ENCODE measurements at regions of chr12 and their contacts with region 1.

Region 1: GRCh38 chr12:111405149-111405860 is 418 bp upstream of the SH2B3 start:
- DNase-seq: peak; percentile 96 to 100 (median 99)
- ATAC-seq: peak; percentile 78
- H3K4me3 ChIP-seq: peak overlapping the region; percentile 63
- H3K4me3 Mint-ChIP-seq: peak overlapping the region; percentile 89
- H3K27ac ChIP-seq: peak overlapping the region; percentile 75 to 98
- H3K27ac Mint-ChIP-seq: peak overlapping the region; percentile 72
- H3K4me1 ChIP-seq: peaks cover 68% of the 10 kb centered on the region
- H3K4me1 Mint-ChIP-seq: peaks cover 62% of the 10 kb centered on the region
- H3K27me3 ChIP-seq: no peaks in the 10 kb centered on the region
- H3K27me3 Mint-ChIP-seq: no peaks in the 10 kb centered on the region
- CTCF ChIP-seq: peak; percentile 74

Region 2: DNA sequence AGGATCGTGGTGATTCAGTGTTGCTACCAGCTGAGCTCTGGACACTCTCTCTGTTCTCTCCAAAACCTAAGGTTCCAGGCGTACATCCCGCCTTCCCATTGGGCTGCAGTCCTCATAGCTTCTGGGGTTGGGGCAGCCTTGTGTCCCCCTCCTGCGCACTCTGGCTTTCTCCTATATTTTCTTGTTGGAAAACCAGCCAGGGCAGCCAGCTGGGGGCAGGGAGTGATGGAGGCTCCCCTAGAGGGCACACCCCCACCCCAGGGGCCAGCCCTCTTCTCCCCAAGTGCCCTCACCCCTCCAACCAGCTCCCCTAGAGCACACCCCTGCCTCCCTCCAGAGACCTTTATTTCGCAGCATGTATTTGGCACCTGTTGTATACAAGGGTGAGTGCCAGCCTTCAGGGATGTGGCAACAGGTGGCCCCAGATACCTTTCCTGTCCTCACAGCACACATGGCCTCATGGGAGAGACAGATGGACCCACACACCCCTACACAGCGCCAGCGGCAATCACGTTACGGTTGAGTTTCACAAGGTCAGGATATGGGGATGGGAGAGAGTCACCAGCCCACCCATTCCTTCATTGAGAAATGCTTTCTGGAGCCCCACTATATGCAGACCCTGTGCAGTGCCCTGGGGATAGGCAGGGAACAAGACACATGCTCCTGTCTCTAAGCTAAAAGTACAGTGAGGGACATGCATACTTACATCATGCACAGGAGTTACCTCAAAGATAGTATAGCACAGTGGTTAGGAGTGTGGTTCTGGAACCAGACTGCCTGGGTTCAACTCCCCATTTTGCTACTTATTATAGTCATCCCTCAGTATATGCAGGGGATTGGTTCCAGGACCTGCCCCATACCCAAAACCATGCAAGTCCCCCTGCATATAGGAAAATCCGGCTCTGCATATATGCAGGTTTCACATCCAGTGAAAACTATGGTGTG is 177.6 kb before region 1 on chr12:
- CTCF ChIA-PET with region 1: no interaction called
- POLR2A ChIA-PET with region 1: no interaction called
- intact Hi-C with region 1: no loop called
- DNase-seq: no peak
- ATAC-seq: no peak
- H3K4me3 ChIP-seq: no peak overlapping the region
- H3K4me3 Mint-ChIP-seq: no peak overlapping the region
- H3K27ac ChIP-seq: no peak overlapping the region
- H3K27ac Mint-ChIP-seq: no peak overlapping the region
- H3K4me1 ChIP-seq: no peaks in the 10 kb centered on the region
- H3K4me1 Mint-ChIP-seq: no peaks in the 10 kb centered on the region
- H3K27me3 ChIP-seq: peaks cover 4% of the 10 kb centered on the region in 2 experiments
- H3K27me3 Mint-ChIP-seq: peaks cover 13% of the 10 kb centered on the region
- CTCF ChIP-seq: no peak

Region 3: DNA sequence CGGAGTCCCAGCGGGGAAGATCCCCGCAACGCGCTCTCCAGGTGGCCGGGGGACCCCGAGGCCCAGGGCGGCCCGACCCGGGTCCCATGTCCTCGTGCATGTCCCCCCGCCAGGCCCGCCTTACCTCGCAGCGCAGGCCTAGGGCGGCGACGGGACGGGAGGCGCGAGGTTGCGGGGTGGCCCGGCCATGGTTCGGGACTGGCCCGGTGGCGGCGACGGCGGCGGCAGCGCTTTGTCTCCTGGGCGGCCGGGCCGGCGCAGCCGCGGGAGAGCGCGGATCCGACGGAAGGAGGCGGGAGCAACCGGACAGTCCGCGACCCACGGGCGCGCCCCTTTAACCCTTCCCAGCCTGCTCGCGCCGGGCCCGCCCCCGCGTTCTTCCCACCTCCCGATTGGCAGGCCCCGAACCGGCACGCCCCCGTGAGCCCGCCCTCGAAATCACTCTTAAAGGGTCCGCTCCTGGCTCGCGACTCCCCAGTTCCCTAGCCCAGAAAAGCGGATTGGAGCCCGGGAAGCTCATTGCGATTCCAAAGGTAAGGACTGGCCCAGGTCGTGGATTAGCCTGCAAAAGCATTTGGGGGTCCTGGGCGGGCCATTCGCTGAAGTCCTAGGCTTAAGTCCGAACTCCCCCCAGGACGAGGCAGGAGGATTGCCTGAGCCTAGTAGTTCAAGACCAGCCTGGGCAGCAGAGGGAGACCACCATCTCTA is 36.4 kb before region 1 on chr12 and contains the start of gene PHETA1:
- CTCF ChIA-PET with region 1: no interaction called
- POLR2A ChIA-PET with region 1: no interaction called
- intact Hi-C with region 1: loop called in 1 of 2 experiments (anchors 1 kb)
- DNase-seq: peak; percentile 49 to 85 (median 70)
- ATAC-seq: peak; percentile 87
- H3K4me3 ChIP-seq: peak within 1 kb of the TSS; percentile 71
- H3K4me3 Mint-ChIP-seq: peak within 1 kb of the TSS; percentile 92
- H3K27ac ChIP-seq: no peak within 1 kb of the TSS
- H3K27ac Mint-ChIP-seq: peak within 1 kb of the TSS; percentile 36
- H3K4me1 ChIP-seq: peaks cover 24% of the 10 kb centered on the region
- H3K4me1 Mint-ChIP-seq: peaks cover 21% of the 10 kb centered on the region
- H3K27me3 ChIP-seq: no peaks in the 10 kb centered on the region
- H3K27me3 Mint-ChIP-seq: no peaks in the 10 kb centered on the region
- CTCF ChIP-seq: no peak
- total RNA-seq, gene PHETA1: 1.3 to 1.7 TPM

Region 4: GRCh38 chr12:111424793-111425251 is 19.5 kb after region 1 on chr12:
- CTCF ChIA-PET with region 1: interaction called, 5 read pairs
- POLR2A ChIA-PET with region 1: interaction called, 35 read pairs
- intact Hi-C with region 1: loop called (anchors 1 to 2 kb)
- DNase-seq: peak in 2 of 14 experiments; percentile 53 to 63
- ATAC-seq: peak; percentile 45
- H3K4me3 ChIP-seq: no peak overlapping the region
- H3K4me3 Mint-ChIP-seq: no peak overlapping the region
- H3K27ac ChIP-seq: peak overlapping the region; percentile 14 to 63
- H3K27ac Mint-ChIP-seq: peak overlapping the region; percentile 100
- H3K4me1 ChIP-seq: peaks cover 65% of the 10 kb centered on the region
- H3K4me1 Mint-ChIP-seq: peaks cover 63% of the 10 kb centered on the region
- H3K27me3 ChIP-seq: no peaks in the 10 kb centered on the region
- H3K27me3 Mint-ChIP-seq: no peaks in the 10 kb centered on the region
- CTCF ChIP-seq: no peak

Region 5: GRCh38 chr12:111434680-111435338 is 29.5 kb after region 1 on chr12:
- CTCF ChIA-PET with region 1: interaction called, 487 read pairs
- POLR2A ChIA-PET with region 1: interaction called, 66 read pairs
- intact Hi-C with region 1: loop called in 1 of 2 experiments (anchors 1 kb)
- DNase-seq: peak; percentile 68 to 96 (median 82)
- ATAC-seq: peak; percentile 73
- H3K4me3 ChIP-seq: peak overlapping the region; percentile 43
- H3K4me3 Mint-ChIP-seq: peak overlapping the region; percentile 90
- H3K27ac ChIP-seq: peak overlapping the region; percentile 93 to 97
- H3K27ac Mint-ChIP-seq: peak overlapping the region; percentile 100
- H3K4me1 ChIP-seq: peaks cover 97% of the 10 kb centered on the region
- H3K4me1 Mint-ChIP-seq: peaks cover 93% of the 10 kb centered on the region
- H3K27me3 ChIP-seq: no peaks in the 10 kb centered on the region
- H3K27me3 Mint-ChIP-seq: no peaks in the 10 kb centered on the region
- CTCF ChIP-seq: no peak

Region 6: GRCh38 chr12:111444925-111445725 is 39.8 kb after region 1 on chr12:
- CTCF ChIA-PET with region 1: interaction called, 487 read pairs
- POLR2A ChIA-PET with region 1: interaction called, 53 read pairs
- intact Hi-C with region 1: loop called in 1 of 2 experiments (anchors 1 kb)
- DNase-seq: peak; percentile 58 to 95 (median 73)
- ATAC-seq: peak; percentile 96
- H3K4me3 ChIP-seq: peak overlapping the region; percentile 12
- H3K4me3 Mint-ChIP-seq: peak overlapping the region; percentile 65
- H3K27ac ChIP-seq: peak overlapping the region; percentile 74 to 80
- H3K27ac Mint-ChIP-seq: peak overlapping the region; percentile 82
- H3K4me1 ChIP-seq: peaks cover 76% of the 10 kb centered on the region
- H3K4me1 Mint-ChIP-seq: peaks cover 64% of the 10 kb centered on the region
- H3K27me3 ChIP-seq: no peaks in the 10 kb centered on the region
- H3K27me3 Mint-ChIP-seq: no peaks in the 10 kb centered on the region
- CTCF ChIP-seq: no peak

Region 7: DNA sequence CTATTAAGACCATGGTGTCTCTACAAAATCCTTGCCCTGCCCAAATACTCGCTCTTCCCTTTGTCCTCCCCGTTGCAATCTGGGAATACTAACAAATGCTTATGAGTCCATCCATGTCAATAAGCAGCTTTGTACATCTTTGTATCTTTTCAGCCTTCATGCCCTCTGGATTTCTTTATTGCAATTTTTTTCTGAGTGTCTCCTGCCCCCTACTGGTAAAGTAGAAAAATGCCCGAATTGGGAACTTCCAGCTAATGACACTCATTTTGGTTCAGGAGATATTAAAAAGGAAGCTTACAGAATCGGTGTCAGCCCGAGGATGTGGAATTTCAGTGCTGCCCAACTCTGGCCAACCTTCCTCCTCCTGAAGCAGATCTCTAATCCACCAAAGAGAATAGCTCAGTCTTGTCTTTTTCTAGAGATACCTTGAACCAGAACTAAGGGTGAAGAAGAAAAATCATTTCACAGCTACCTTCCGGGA is 46.4 kb after region 1 on chr12:
- CTCF ChIA-PET with region 1: interaction called, 487 read pairs
- POLR2A ChIA-PET with region 1: interaction called, 53 read pairs
- intact Hi-C with region 1: loop called in 1 of 2 experiments (anchors 1 kb)
- DNase-seq: peak in 3 of 14 experiments; percentile 77 to 81 (median 81)
- ATAC-seq: peak; percentile 78
- H3K4me3 ChIP-seq: no peak overlapping the region
- H3K4me3 Mint-ChIP-seq: no peak overlapping the region
- H3K27ac ChIP-seq: no peak overlapping the region
- H3K27ac Mint-ChIP-seq: peak overlapping the region; percentile 14
- H3K4me1 ChIP-seq: peaks cover 25% of the 10 kb centered on the region
- H3K4me1 Mint-ChIP-seq: peaks cover 18% of the 10 kb centered on the region
- H3K27me3 ChIP-seq: no peaks in the 10 kb centered on the region
- H3K27me3 Mint-ChIP-seq: no peaks in the 10 kb centered on the region
- CTCF ChIP-seq: peak; percentile 80

Region 8: GRCh38 chr12:111599459-111600204 is 194.3 kb after region 1 on chr12:
- CTCF ChIA-PET with region 1: no interaction called
- POLR2A ChIA-PET with region 1: interaction called, 3 read pairs
- intact Hi-C with region 1: loop called (anchors 5 to 10 kb)
- DNase-seq: peak; percentile 70 to 92 (median 80)
- ATAC-seq: peak; percentile 69
- H3K4me3 ChIP-seq: peak overlapping the region; percentile 92
- H3K4me3 Mint-ChIP-seq: peak overlapping the region; percentile 94
- H3K27ac ChIP-seq: peak overlapping the region; percentile 83 to 88
- H3K27ac Mint-ChIP-seq: peak overlapping the region; percentile 88
- H3K4me1 ChIP-seq: peaks cover 19% of the 10 kb centered on the region
- H3K4me1 Mint-ChIP-seq: peaks cover 31% of the 10 kb centered on the region
- H3K27me3 ChIP-seq: no peaks in the 10 kb centered on the region
- H3K27me3 Mint-ChIP-seq: no peaks in the 10 kb centered on the region
- CTCF ChIP-seq: no peak

Measured in CD4-positive, alpha-beta T cell (primary cell).